IMR-90 (cell line): ENCODE measurements at regions of chr12 and their contacts with region 1.

Region 1: GRCh38 chr12:59010118-59010517 is 89.8 kb upstream of the LRIG3 start:
- DNase-seq: no peak
- ATAC-seq: no peak
- H3K4me3 ChIP-seq: no peak overlapping the region
- H3K27ac ChIP-seq: no peak overlapping the region
- H3K4me1 ChIP-seq: peaks cover 2% of the 10 kb centered on the region; the same call in 1 of the 2 replicates
- H3K27me3 ChIP-seq: no peaks in the 10 kb centered on the region
- CTCF ChIP-seq: no peak
- POLR2A ChIP-seq: no peak
- RAD21 ChIP-seq: no peak

Region 2: DNA sequence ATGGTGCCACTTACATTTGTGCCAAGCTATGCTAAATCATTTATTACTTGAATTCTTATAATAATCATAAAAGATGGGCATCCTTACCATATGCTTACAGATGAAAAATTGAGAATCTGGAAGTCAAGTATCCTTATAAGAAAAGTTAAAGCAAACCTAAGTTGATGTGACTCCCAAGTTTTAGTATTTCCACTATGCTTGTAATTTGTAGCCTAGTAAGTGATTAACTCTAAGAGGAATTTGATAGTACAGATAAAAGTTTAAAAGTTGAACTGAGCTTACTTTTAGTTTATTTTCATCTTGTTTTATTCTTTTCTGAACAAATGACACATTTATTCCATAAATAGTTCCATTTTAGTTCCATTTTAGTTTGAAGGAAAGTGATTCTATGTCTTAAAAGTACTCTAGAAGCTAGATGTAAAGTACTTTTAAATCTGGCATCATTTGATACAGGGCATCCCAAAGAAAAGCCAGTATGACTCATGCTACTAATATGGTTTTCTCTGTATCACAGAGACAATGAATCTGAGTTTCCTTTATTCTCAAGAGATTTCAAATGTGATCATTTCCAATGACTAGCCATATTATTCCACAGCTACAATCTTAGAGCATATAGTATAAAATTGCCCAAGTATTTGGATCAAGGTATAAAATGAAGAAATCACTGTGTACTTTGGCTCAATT is 1181.7 kb after region 1 on chr12:
- CTCF ChIA-PET with region 1: no interaction called
- POLR2A ChIA-PET with region 1: no interaction called
- dilution Hi-C with region 1: no loop called
- in situ Hi-C with region 1: no loop called
- intact Hi-C with region 1: loop called (anchors 5 kb)
- DNase-seq: peak; percentile 64
- ATAC-seq: peak; percentile 51
- H3K4me3 ChIP-seq: no peak overlapping the region
- H3K27ac ChIP-seq: no peak overlapping the region
- H3K4me1 ChIP-seq: peaks cover 5% of the 10 kb centered on the region; the same call in 1 of the 2 replicates
- H3K27me3 ChIP-seq: no peaks in the 10 kb centered on the region
- CTCF ChIP-seq: no peak
- POLR2A ChIP-seq: no peak
- RAD21 ChIP-seq: no peak